Activated CD8-positive, alpha-beta T cell treated with anti-CD3 and anti-CD28 coated beads for 36 hours (primary cell): ENCODE measurements at regions of chr1 and their contacts with region 1.

Region 1: GRCh38 chr1:46718727-46719622 is at the start of gene EFCAB14:
- DNase-seq: peak; percentile 99
- ATAC-seq: peak; percentile 100
- H3K4me3 Mint-ChIP-seq: peak within 1 kb of the TSS; percentile 85
- H3K27ac Mint-ChIP-seq: peak within 1 kb of the TSS; percentile 90
- H3K4me1 Mint-ChIP-seq: peaks cover 34% of the 10 kb centered on the region
- H3K27me3 Mint-ChIP-seq: no peaks in the 10 kb centered on the region
- CTCF ChIP-seq: no peak
- total RNA-seq, gene EFCAB14: 39.6 to 41.6 TPM

Region 2: DNA sequence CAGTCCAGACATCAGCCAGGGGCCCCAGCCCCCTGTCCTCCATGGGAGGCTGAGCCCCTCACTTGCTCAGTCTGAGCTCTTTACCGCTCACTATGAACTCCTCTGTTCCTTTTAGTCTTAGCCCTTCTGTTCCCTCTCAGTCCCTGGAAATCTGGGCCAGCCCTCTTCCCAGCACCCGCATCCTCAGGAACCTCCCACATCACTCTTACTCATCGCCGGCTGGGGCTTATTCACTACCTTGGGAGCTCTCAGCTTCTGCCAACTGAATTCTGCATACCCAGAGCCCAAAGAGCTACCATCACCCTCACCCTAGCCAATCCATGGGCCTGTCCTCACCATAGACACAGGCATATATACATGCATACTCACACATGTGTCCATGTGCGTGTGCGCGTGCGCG is 179.0 kb before region 1 on chr1:
- CTCF ChIA-PET with region 1: no interaction called
- POLR2A ChIA-PET with region 1: interaction called, 3 read pairs
- intact Hi-C with region 1: loop called (anchors 5 kb)
- DNase-seq: no peak
- ATAC-seq: no peak
- H3K4me3 Mint-ChIP-seq: no peak overlapping the region
- H3K27ac Mint-ChIP-seq: no peak overlapping the region
- H3K4me1 Mint-ChIP-seq: no peaks in the 10 kb centered on the region
- H3K27me3 Mint-ChIP-seq: peaks cover 28% of the 10 kb centered on the region
- CTCF ChIP-seq: no peak

Region 3: DNA sequence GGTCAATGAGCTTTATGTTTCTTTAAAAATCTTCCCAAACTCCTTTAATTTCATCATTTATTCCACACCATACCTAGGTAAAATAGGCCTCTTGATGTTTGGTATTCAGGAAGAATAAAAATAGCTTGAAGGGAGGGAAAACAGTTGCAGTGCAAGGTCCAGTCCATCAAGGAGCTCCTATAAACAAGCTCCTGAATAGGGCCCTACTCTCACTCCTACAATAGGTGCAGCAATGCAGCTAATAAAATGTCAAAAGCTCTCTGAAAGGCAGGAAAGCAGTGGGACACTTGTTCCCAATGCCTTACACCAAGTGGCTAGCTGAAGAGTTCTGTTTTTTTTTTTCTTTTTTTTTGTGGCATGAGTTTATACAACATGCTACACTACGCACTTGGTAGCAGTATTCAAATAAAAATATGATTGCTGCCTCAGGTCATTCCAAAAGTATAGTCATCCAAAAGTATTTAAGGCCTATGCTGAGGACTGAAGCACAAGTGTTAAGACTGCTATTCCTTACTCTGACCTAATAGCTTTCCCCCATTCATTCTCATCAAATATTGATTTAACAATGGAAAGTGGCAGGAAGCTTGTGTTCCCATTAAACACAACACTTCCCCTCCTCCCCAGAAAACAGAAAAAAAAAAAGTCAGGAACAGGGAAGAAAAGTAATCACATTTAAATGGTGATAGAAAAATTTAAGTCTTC is 37.5 kb before region 1 on chr1:
- CTCF ChIA-PET with region 1: no interaction called
- POLR2A ChIA-PET with region 1: no interaction called
- intact Hi-C with region 1: no loop called
- DNase-seq: no peak
- ATAC-seq: no peak
- H3K4me3 Mint-ChIP-seq: no peak overlapping the region
- H3K27ac Mint-ChIP-seq: peak overlapping the region; percentile 44
- H3K4me1 Mint-ChIP-seq: peaks cover 9% of the 10 kb centered on the region
- H3K27me3 Mint-ChIP-seq: no peaks in the 10 kb centered on the region
- CTCF ChIP-seq: no peak